AG04449 (cell line): ENCODE measurements at regions of chr6 and their contacts with region 1.

Region 1: DNA sequence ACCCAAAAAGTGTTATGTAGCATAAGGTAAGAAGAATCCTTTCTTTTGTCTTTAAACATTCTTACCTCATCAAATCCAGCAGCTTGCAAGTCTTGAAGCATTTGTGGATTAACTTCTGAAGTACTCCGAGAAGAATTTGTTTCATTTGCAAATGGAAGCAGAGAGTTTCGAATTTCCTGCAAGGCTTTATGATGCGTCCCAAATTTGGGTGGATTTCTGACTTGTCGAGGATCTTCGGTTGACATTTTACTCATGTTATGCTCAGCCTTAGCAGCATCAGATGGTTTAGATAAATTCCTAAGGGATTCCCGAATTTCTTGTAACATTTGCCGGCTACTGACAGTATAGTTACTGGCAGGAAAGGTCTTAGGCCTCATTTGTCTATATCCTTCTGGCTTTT is 16.2 kb downstream of the LATS1 start:
- DNase-seq: no peak
- H3K4me3 ChIP-seq: no peak overlapping the region
- CTCF ChIP-seq: no peak

Region 2: DNA sequence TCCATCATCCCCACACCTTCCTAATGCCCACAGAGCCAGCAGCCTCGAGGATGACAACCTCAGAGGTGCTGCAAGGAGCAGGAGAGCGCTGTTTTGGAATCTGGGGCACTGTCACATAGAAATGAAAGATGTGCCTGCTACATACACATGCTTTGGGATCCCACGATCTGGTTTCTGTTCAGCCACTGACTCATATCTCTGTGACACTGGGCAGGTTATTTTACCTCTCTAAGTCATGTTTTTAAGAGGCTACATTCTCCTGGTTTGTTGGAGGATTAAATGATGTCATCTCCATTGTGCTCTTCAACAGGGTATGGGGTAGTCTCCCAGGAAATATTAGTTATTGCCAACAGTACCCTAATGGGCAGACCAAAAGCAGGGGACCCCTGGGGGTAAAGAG is 416.8 kb before region 1 on chr6:
- CTCF ChIA-PET with region 1: no interaction called
- POLR2A ChIA-PET with region 1: no interaction called
- DNase-seq: no peak
- H3K4me3 ChIP-seq: no peak overlapping the region
- CTCF ChIP-seq: no peak

Region 3: GRCh38 chr6:149717588-149718458 is 16.1 kb after region 1 on chr6 and contains the start of gene LATS1:
- CTCF ChIA-PET with region 1: interaction called, 5 read pairs
- POLR2A ChIA-PET with region 1: interaction called, 11 read pairs
- DNase-seq: no peak
- H3K4me3 ChIP-seq: peak within 1 kb of the TSS; percentile 92
- CTCF ChIP-seq: no peak

Region 4: DNA sequence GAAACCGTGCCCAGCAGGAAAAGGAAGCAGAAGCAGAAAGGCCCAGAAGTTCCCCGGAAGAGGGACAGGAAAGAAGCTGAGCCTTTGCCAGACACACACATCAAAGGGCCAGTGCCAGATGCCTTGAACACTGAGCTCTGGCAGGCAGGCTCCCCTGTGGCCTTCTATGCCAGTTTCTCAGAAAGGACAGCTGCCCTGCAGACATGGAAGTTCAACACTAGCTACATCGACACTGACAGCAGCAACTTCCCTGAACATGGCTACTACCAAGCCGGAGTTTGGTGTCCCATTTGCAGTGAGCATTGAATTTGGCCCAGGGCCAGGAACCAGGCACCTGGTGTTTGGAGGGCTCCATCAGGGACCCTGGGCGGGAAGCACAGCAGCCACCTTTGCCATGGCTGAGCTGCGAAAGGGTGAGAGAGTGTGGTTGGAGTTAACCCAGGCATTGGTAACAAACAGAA is 204.2 kb after region 1 on chr6:
- CTCF ChIA-PET with region 1: no interaction called
- POLR2A ChIA-PET with region 1: no interaction called
- DNase-seq: no peak
- H3K4me3 ChIP-seq: no peak overlapping the region
- CTCF ChIP-seq: no peak